WTC11 (cell line): ENCODE measurements at regions of chr1 and their contacts with region 1.

Region 1: DNA sequence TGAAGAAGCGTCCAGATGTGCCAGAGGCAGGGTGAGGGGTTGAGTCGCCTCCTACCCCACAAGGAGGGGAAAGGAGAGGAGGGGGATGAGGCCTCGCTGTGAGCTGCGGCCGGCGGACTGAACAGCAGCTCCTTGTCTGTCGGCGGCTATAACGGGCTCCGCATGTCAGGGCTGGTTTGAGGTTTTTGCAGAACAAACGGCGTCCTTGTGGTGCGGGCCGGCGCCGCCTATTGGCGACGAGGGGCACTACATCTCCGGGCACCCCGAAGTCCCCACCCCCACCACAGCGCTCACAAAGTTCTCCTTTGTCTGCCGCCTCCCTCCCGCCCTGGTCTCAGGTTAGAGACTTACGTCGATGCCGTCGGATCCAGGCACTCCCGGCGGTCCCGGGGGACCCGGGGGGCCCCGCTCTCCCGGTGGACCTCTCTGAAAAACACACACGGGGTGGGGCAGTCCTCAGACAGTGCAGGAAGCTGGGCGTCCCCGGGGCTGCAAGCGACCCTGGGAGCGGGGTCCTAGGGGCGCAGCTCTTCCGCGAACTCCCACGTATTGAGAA is 1.8 kb downstream of the COL9A2 start:
- DNase-seq: peak; percentile 89
- ATAC-seq: peak; percentile 65
- H3K4me3 Mint-ChIP-seq: peak overlapping the region; percentile 73
- H3K27ac Mint-ChIP-seq: no peak overlapping the region
- H3K4me1 Mint-ChIP-seq: peaks cover 20% of the 10 kb centered on the region
- H3K27me3 Mint-ChIP-seq: peaks cover 80% of the 10 kb centered on the region
- CTCF ChIP-seq: peak; percentile 96

Region 2: GRCh38 chr1:40153073-40153770 is 162.1 kb before region 1 on chr1:
- CTCF ChIA-PET with region 1: interaction called, 29 read pairs
- POLR2A ChIA-PET with region 1: no interaction called
- DNase-seq: no peak
- ATAC-seq: peak; percentile 58
- H3K4me3 Mint-ChIP-seq: no peak overlapping the region
- H3K27ac Mint-ChIP-seq: no peak overlapping the region
- H3K4me1 Mint-ChIP-seq: no peaks in the 10 kb centered on the region
- H3K27me3 Mint-ChIP-seq: peaks cover 4% of the 10 kb centered on the region
- CTCF ChIP-seq: peak; percentile 2; the same call in 1 of the 2 replicates

Region 3: GRCh38 chr1:40257688-40258444 is 57.5 kb before region 1 on chr1 and contains the start of gene ZMPSTE24:
- CTCF ChIA-PET with region 1: interaction called, 12 read pairs
- POLR2A ChIA-PET with region 1: no interaction called
- DNase-seq: peak; percentile 97
- ATAC-seq: peak; percentile 97
- H3K4me3 Mint-ChIP-seq: peak within 1 kb of the TSS; percentile 99
- H3K27ac Mint-ChIP-seq: peak within 1 kb of the TSS; percentile 100
- H3K4me1 Mint-ChIP-seq: peaks cover 6% of the 10 kb centered on the region
- H3K27me3 Mint-ChIP-seq: no peaks in the 10 kb centered on the region
- CTCF ChIP-seq: no peak
- total RNA-seq, gene ZMPSTE24: 27.0 to 31.7 TPM (median 28.9 TPM) in 3 replicates

Region 4: GRCh38 chr1:40299366-40300248 is 15.7 kb before region 1 on chr1:
- CTCF ChIA-PET with region 1: interaction called, 26 read pairs
- POLR2A ChIA-PET with region 1: no interaction called
- DNase-seq: no peak
- ATAC-seq: no peak
- H3K4me3 Mint-ChIP-seq: no peak overlapping the region
- H3K27ac Mint-ChIP-seq: no peak overlapping the region
- H3K4me1 Mint-ChIP-seq: no peaks in the 10 kb centered on the region
- H3K27me3 Mint-ChIP-seq: peaks cover 19% of the 10 kb centered on the region
- CTCF ChIP-seq: no peak

Region 5: GRCh38 chr1:40404670-40405462 is 89.5 kb after region 1 on chr1:
- CTCF ChIA-PET with region 1: interaction called, 12 read pairs
- POLR2A ChIA-PET with region 1: no interaction called
- DNase-seq: no peak
- ATAC-seq: no peak
- H3K4me3 Mint-ChIP-seq: no peak overlapping the region
- H3K27ac Mint-ChIP-seq: no peak overlapping the region
- H3K4me1 Mint-ChIP-seq: peaks cover 12% of the 10 kb centered on the region
- H3K27me3 Mint-ChIP-seq: no peaks in the 10 kb centered on the region
- CTCF ChIP-seq: peak; percentile 72

Region 6: GRCh38 chr1:40691538-40692428 is 376.5 kb after region 1 on chr1 and contains the start of gene NFYC:
- CTCF ChIA-PET with region 1: no interaction called
- POLR2A ChIA-PET with region 1: no interaction called
- DNase-seq: peak; percentile 97
- ATAC-seq: peak; percentile 89
- H3K4me3 Mint-ChIP-seq: peak within 1 kb of the TSS; percentile 91
- H3K27ac Mint-ChIP-seq: peak within 1 kb of the TSS; percentile 98
- H3K4me1 Mint-ChIP-seq: peaks cover 57% of the 10 kb centered on the region
- H3K27me3 Mint-ChIP-seq: no peaks in the 10 kb centered on the region
- CTCF ChIP-seq: no peak
- total RNA-seq, gene NFYC: 46.5 to 47.5 TPM (median 47.4 TPM) in 3 replicates